CD4-positive, alpha-beta T cell (primary cell): ENCODE measurements at regions of chr11 and their contacts with region 1.

Region 1: DNA sequence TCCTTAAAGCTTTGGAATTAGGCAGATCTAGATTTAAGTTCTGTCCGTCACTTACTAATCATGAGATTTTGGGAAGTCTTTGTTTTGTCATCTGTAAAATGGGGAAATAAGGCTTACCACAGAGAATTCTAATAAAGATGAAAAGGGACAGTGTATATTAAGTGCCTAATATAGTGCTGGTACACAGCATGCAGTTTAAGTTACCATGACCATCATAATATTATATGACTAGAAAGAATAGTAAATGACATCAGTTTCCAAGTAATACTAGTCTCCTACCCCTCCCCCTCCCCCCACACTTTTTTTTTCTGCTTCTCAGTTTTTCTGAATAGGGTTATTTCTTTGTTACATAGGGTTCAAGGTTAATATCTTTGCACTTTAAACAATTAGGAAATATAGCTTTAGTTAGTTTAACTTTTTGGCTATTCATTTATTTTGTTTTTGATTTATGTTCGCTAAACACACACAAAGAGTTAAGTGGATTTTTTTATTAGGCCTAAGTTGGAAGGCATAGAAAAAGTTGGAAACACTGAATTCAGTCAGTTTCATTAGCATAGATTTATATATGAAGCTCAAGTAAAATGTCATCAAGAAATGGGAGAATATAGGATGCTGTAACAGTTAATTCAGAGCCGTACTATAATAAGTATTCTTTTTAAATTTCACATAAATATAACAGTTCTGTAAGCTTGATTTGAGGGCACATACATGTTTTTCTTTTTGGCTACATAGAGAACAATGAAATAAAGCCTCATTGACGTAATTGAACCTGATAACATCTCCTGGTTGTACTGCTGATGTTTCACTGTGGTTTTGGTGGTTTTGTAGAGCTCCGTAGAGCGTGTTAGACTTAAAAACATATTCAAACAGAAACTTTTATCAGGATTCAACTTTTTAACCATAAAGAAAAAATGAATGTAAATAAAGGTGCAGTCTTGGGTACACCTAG is 121.2 kb downstream of the PDE3B start:
- DNase-seq: peak in 8 of 14 experiments; percentile 9 to 95 (median 48)
- ATAC-seq: peak; percentile 81
- H3K4me3 ChIP-seq: peak overlapping the region; percentile 2
- H3K4me3 Mint-ChIP-seq: peak overlapping the region; percentile 49
- H3K27ac ChIP-seq: peak overlapping the region; percentile 41 to 54
- H3K27ac Mint-ChIP-seq: no peak overlapping the region
- H3K4me1 ChIP-seq: peaks cover 14% of the 10 kb centered on the region
- H3K4me1 Mint-ChIP-seq: peaks cover 47% of the 10 kb centered on the region
- H3K27me3 ChIP-seq: no peaks in the 10 kb centered on the region
- H3K27me3 Mint-ChIP-seq: no peaks in the 10 kb centered on the region
- CTCF ChIP-seq: no peak

Region 2: GRCh38 chr11:14499554-14500180 is 265.2 kb before region 1 on chr11 and contains the start of gene COPB1:
- CTCF ChIA-PET with region 1: no interaction called
- POLR2A ChIA-PET with region 1: interaction called, 13 read pairs
- intact Hi-C with region 1: loop called in 1 of 2 experiments (anchors 1 kb)
- DNase-seq: peak; percentile 84 to 96 (median 90)
- ATAC-seq: peak; percentile 94
- H3K4me3 ChIP-seq: peak within 1 kb of the TSS; percentile 85
- H3K4me3 Mint-ChIP-seq: peak within 1 kb of the TSS; percentile 97
- H3K27ac ChIP-seq: peak within 1 kb of the TSS; percentile 67 to 84
- H3K27ac Mint-ChIP-seq: peak within 1 kb of the TSS; percentile 92
- H3K4me1 ChIP-seq: peaks cover 6% of the 10 kb centered on the region
- H3K4me1 Mint-ChIP-seq: peaks cover 53% of the 10 kb centered on the region
- H3K27me3 ChIP-seq: no peaks in the 10 kb centered on the region
- H3K27me3 Mint-ChIP-seq: no peaks in the 10 kb centered on the region
- CTCF ChIP-seq: no peak
- total RNA-seq, gene COPB1: 93.1 to 95.9 TPM

Region 3: GRCh38 chr11:14537134-14537599 is 227.7 kb before region 1 on chr11:
- CTCF ChIA-PET with region 1: interaction called, 7 read pairs
- POLR2A ChIA-PET with region 1: interaction called, 4 read pairs
- intact Hi-C with region 1: loop called (anchors 2 to 5 kb)
- DNase-seq: peak in 13 of 14 experiments; percentile 11 to 75 (median 37)
- ATAC-seq: peak; percentile 94
- H3K4me3 ChIP-seq: peak overlapping the region; percentile 7
- H3K4me3 Mint-ChIP-seq: peak overlapping the region; percentile 63
- H3K27ac ChIP-seq: no peak overlapping the region
- H3K27ac Mint-ChIP-seq: peak overlapping the region; percentile 63
- H3K4me1 ChIP-seq: peaks cover 7% of the 10 kb centered on the region
- H3K4me1 Mint-ChIP-seq: peaks cover 39% of the 10 kb centered on the region
- H3K27me3 ChIP-seq: no peaks in the 10 kb centered on the region
- H3K27me3 Mint-ChIP-seq: no peaks in the 10 kb centered on the region
- CTCF ChIP-seq: peak; percentile 96

Region 4: GRCh38 chr11:14578541-14578956 is 186.3 kb before region 1 on chr11:
- CTCF ChIA-PET with region 1: interaction called, 9 read pairs
- POLR2A ChIA-PET with region 1: interaction called, 54 read pairs
- intact Hi-C with region 1: loop called in 1 of 2 experiments (anchors 2 kb)
- DNase-seq: peak; percentile 34 to 97 (median 62)
- ATAC-seq: peak; percentile 93
- H3K4me3 ChIP-seq: no peak overlapping the region
- H3K4me3 Mint-ChIP-seq: peak overlapping the region; percentile 23
- H3K27ac ChIP-seq: peak overlapping the region; percentile 77 to 79
- H3K27ac Mint-ChIP-seq: peak overlapping the region; percentile 85
- H3K4me1 ChIP-seq: peaks cover 38% of the 10 kb centered on the region
- H3K4me1 Mint-ChIP-seq: peaks cover 68% of the 10 kb centered on the region
- H3K27me3 ChIP-seq: no peaks in the 10 kb centered on the region
- H3K27me3 Mint-ChIP-seq: no peaks in the 10 kb centered on the region
- CTCF ChIP-seq: no peak

Region 5: DNA sequence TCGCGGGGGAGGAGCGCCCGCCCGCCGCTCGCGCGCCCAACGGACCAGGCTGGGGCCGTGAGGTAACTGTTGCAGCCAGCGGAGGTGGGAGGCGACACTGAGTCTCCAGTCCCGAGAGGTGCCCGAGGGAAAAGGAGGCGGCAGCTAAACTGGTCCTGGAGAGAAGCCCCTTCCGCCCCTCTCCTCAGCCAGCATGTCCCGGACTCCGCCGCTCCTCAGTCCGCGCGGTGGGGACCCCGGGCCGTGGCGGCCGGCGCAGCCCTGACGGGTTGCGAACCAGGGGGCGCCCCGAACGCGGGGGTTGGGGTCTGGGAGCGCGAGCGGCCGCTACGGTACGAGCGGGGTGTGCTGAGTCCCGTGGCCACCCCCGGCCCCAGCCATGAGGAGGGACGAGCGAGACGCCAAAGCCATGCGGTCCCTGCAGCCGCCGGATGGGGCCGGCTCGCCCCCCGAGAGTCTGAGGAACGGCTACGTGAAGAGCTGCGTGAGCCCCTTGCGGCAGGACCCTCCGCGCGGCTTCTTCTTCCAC is 121.1 kb before region 1 on chr11 and contains the start of gene PDE3B:
- CTCF ChIA-PET with region 1: interaction called, 12 read pairs
- POLR2A ChIA-PET with region 1: interaction called, 76 read pairs
- intact Hi-C with region 1: loop called (anchors 2 to 5 kb)
- DNase-seq: peak; percentile 39 to 89 (median 70)
- ATAC-seq: peak; percentile 59
- H3K4me3 ChIP-seq: peak within 1 kb of the TSS; percentile 91
- H3K4me3 Mint-ChIP-seq: peak within 1 kb of the TSS; percentile 96
- H3K27ac ChIP-seq: peak within 1 kb of the TSS; percentile 35 to 80
- H3K27ac Mint-ChIP-seq: peak within 1 kb of the TSS; percentile 90
- H3K4me1 ChIP-seq: peaks cover 15% of the 10 kb centered on the region
- H3K4me1 Mint-ChIP-seq: peaks cover 58% of the 10 kb centered on the region
- H3K27me3 ChIP-seq: no peaks in the 10 kb centered on the region
- H3K27me3 Mint-ChIP-seq: no peaks in the 10 kb centered on the region
- CTCF ChIP-seq: no peak
- total RNA-seq, gene PDE3B: 103 to 106 TPM

Region 6: GRCh38 chr11:14705067-14705466 is 59.8 kb before region 1 on chr11:
- CTCF ChIA-PET with region 1: no interaction called
- POLR2A ChIA-PET with region 1: no interaction called
- intact Hi-C with region 1: loop called in 1 of 2 experiments (anchors 5 kb)
- DNase-seq: no peak
- ATAC-seq: no peak
- H3K4me3 ChIP-seq: no peak overlapping the region
- H3K4me3 Mint-ChIP-seq: no peak overlapping the region
- H3K27ac ChIP-seq: no peak overlapping the region
- H3K27ac Mint-ChIP-seq: no peak overlapping the region
- H3K4me1 ChIP-seq: no peaks in the 10 kb centered on the region
- H3K4me1 Mint-ChIP-seq: peaks cover 50% of the 10 kb centered on the region
- H3K27me3 ChIP-seq: no peaks in the 10 kb centered on the region
- H3K27me3 Mint-ChIP-seq: no peaks in the 10 kb centered on the region
- CTCF ChIP-seq: no peak

Region 7: GRCh38 chr11:14751975-14752407 is 12.9 kb before region 1 on chr11:
- CTCF ChIA-PET with region 1: interaction called, 5 read pairs
- POLR2A ChIA-PET with region 1: interaction called, 20 read pairs
- intact Hi-C with region 1: no loop called
- DNase-seq: peak in 1 of 14 experiments; percentile 25
- ATAC-seq: no peak
- H3K4me3 ChIP-seq: no peak overlapping the region
- H3K4me3 Mint-ChIP-seq: peak overlapping the region; percentile 68
- H3K27ac ChIP-seq: no peak overlapping the region
- H3K27ac Mint-ChIP-seq: peak overlapping the region; percentile 52
- H3K4me1 ChIP-seq: peaks cover 4% of the 10 kb centered on the region
- H3K4me1 Mint-ChIP-seq: peaks cover 77% of the 10 kb centered on the region
- H3K27me3 ChIP-seq: no peaks in the 10 kb centered on the region
- H3K27me3 Mint-ChIP-seq: no peaks in the 10 kb centered on the region
- CTCF ChIP-seq: no peak